ENCODE measurements at regions of chrX and their contacts with region 1.

Region 1: DNA sequence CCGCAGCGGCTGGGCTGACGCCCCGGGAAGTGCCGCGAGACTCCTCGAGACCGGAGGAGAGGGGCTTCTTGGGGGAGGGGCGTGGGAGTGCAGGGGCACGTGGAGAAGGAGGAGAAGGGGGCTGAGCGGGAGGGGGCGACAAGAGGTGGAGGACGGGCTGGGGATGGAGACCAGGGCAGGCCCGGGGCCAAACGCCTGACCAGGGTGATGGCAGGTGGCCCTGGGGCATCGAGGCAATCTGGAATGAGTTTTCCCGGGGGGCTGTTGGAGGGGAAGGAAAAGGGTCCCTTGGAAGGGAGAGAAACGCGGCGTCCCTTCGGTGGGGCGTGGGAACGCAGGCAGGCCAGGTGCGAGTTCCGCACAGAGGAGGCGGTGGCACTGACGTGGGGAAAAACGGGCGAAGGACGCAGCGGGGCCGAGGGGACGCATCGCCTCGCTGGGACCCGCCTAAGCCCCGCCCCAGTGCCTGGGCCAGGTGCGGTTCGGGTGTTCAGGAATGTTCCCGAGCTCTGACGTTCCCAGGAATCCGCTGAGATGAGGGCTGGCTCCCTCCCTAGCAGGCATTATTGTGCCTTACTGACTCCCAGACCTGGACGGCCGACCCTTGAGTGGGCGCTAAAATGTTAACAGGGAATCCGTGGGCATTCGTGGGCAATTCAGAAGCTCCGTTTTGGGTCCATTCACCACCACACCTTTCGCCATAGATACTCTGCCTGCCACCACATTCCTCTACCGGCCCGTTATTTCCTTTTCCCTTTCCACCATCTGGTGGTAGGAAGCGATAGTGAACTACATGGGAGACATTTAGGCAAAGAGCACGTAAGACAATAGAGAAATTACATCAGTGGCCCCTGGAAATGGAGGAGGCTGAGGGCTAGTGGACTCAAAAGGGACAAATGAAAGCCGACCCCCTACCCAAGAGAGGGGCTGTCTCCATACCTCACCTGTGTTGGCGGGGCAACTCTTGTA is 795 bp upstream of the SH3KBP1 start:
- DNase-seq: peak; percentile 48
- H3K4me3 Mint-ChIP-seq: peak overlapping the region; percentile 73
- H3K27ac Mint-ChIP-seq: peak overlapping the region; percentile 78
- H3K4me1 Mint-ChIP-seq: peaks cover 41% of the 10 kb centered on the region
- H3K27me3 Mint-ChIP-seq: no peaks in the 10 kb centered on the region

Region 2: GRCh38 chrX:19372170-19372546 is 516.0 kb before region 1 on chrX:
- CTCF ChIA-PET with region 1: no interaction called
- POLR2A ChIA-PET with region 1: interaction called, 4 read pairs
- intact Hi-C with region 1: loop called (anchors 2 kb)
- DNase-seq: peak; percentile 80
- H3K4me3 Mint-ChIP-seq: peak overlapping the region; percentile 73
- H3K27ac Mint-ChIP-seq: no peak overlapping the region
- H3K4me1 Mint-ChIP-seq: peaks cover 2% of the 10 kb centered on the region
- H3K27me3 Mint-ChIP-seq: no peaks in the 10 kb centered on the region

Region 3: DNA sequence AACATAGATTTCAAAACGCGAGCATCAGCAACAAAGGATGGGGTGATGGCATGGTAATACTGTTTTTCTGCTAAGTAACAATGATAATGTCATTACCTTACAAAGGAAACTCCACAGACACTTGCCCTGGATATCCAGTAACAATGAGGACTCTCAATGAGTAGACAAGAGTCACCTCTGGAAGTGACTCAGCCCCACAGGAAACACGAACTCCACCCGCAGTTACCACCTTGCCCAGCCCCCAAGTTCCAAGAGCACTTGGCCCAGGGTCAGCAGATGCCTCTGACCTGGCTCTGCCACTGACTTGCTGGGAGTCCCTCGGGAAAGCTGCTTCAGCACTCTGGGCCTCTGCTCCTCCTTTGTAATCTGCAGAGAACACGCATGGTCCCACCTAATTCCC is 262.6 kb before region 1 on chrX:
- CTCF ChIA-PET with region 1: no interaction called
- POLR2A ChIA-PET with region 1: no interaction called
- intact Hi-C with region 1: loop called (anchors 5 kb)
- DNase-seq: peak; percentile 80
- H3K4me3 Mint-ChIP-seq: no peak overlapping the region
- H3K27ac Mint-ChIP-seq: peak overlapping the region; percentile 91
- H3K4me1 Mint-ChIP-seq: peaks cover 74% of the 10 kb centered on the region
- H3K27me3 Mint-ChIP-seq: no peaks in the 10 kb centered on the region

Region 4: GRCh38 chrX:19739683-19740082 is 148.5 kb before region 1 on chrX:
- CTCF ChIA-PET with region 1: interaction called, 7 read pairs
- POLR2A ChIA-PET with region 1: no interaction called
- intact Hi-C with region 1: loop called (anchors 2 kb)
- DNase-seq: peak; percentile 63
- H3K4me3 Mint-ChIP-seq: no peak overlapping the region
- H3K27ac Mint-ChIP-seq: peak overlapping the region; percentile 74
- H3K4me1 Mint-ChIP-seq: peaks cover 76% of the 10 kb centered on the region
- H3K27me3 Mint-ChIP-seq: no peaks in the 10 kb centered on the region

Region 5: DNA sequence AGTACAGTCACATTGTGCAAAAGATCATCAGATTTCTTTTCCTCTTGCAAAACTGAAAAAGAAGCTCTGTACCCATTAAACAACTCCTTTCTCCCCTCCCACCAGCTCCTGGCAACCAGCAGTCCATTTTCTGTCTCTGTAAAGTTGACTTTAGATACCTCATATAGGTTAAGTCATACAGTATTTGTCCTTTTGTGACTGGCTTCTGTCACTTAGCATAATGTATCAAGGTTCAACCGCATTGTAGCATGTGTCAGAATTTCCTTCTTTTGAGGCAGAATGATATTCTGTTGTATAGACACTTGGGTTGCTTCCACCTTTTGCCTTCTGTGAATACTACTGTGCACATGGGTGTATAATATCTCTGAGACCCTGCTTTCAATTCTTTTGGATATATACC is 122.6 kb before region 1 on chrX:
- CTCF ChIA-PET with region 1: no interaction called
- POLR2A ChIA-PET with region 1: no interaction called
- intact Hi-C with region 1: loop called (anchors 1 kb)
- DNase-seq: peak; percentile 41
- H3K4me3 Mint-ChIP-seq: peak overlapping the region; percentile 12
- H3K27ac Mint-ChIP-seq: peak overlapping the region; percentile 71
- H3K4me1 Mint-ChIP-seq: peaks cover 79% of the 10 kb centered on the region
- H3K27me3 Mint-ChIP-seq: no peaks in the 10 kb centered on the region

Region 6: GRCh38 chrX:19840899-19841648 is 47.1 kb before region 1 on chrX:
- CTCF ChIA-PET with region 1: no interaction called
- POLR2A ChIA-PET with region 1: interaction called, 3 read pairs
- intact Hi-C with region 1: loop called (anchors 5 kb)
- DNase-seq: peak; percentile 63
- H3K4me3 Mint-ChIP-seq: peak overlapping the region; percentile 60
- H3K27ac Mint-ChIP-seq: peak overlapping the region; percentile 98
- H3K4me1 Mint-ChIP-seq: peaks cover 67% of the 10 kb centered on the region
- H3K27me3 Mint-ChIP-seq: no peaks in the 10 kb centered on the region

Region 7: GRCh38 chrX:20205927-20206708 is 317.9 kb after region 1 on chrX:
- CTCF ChIA-PET with region 1: no interaction called
- POLR2A ChIA-PET with region 1: no interaction called
- intact Hi-C with region 1: no loop called
- DNase-seq: peak; percentile 24
- H3K4me3 Mint-ChIP-seq: no peak overlapping the region
- H3K27ac Mint-ChIP-seq: no peak overlapping the region
- H3K4me1 Mint-ChIP-seq: peaks cover 52% of the 10 kb centered on the region
- H3K27me3 Mint-ChIP-seq: no peaks in the 10 kb centered on the region